ENCODE measurements at regions of chr20 and their contacts with region 1.

Region 1: GRCh38 chr20:58236612-58237330 is 8.3 kb upstream of the ANKRD60 start:
- ATAC-seq: peak; percentile 82 to 97 (median 90)
- H3K4me3 ChIP-seq: peak overlapping the region; percentile 18 to 45 (median 32)
- H3K27ac ChIP-seq: no peak overlapping the region
- H3K4me1 ChIP-seq: peaks cover 10 to 21% of the 10 kb centered on the region in 2 donors

Region 2: GRCh38 chr20:58296051-58296795 is 59.5 kb after region 1 on chr20:
- in situ Hi-C with region 1: no loop called
- ATAC-seq: no peak
- H3K4me3 ChIP-seq: no peak overlapping the region
- H3K27ac ChIP-seq: no peak overlapping the region
- H3K4me1 ChIP-seq: peaks cover 4 to 37% of the 10 kb centered on the region in 2 donors

Region 3: GRCh38 chr20:58447511-58448391 is 211.0 kb after region 1 on chr20:
- in situ Hi-C with region 1: loop called in 2 of 9 experiments (anchors 25 kb)
- ATAC-seq: peak in 6 of 8 experiments; percentile 32 to 81 (median 56)
- H3K4me3 ChIP-seq: no peak overlapping the region
- H3K27ac ChIP-seq: peak overlapping the region in 1 of 2 donors; percentile 70
- H3K4me1 ChIP-seq: peaks cover 38 to 56% of the 10 kb centered on the region in 2 donors

Region 4: GRCh38 chr20:58650776-58651558 is 414.2 kb after region 1 on chr20 and contains the start of gene STX16:
- in situ Hi-C with region 1: loop called in 4 of 9 experiments (anchors 25 kb)
- ATAC-seq: peak; percentile 79 to 85 (median 82)
- H3K4me3 ChIP-seq: peak within 1 kb of the TSS; percentile 57 to 95 (median 84)
- H3K27ac ChIP-seq: peak within 1 kb of the TSS; percentile 69 to 90
- H3K4me1 ChIP-seq: peaks cover 27 to 45% of the 10 kb centered on the region in 2 donors
- total RNA-seq, gene STX16: 17.5 to 86.6 (median 30.4) TPM

Region 5: DNA sequence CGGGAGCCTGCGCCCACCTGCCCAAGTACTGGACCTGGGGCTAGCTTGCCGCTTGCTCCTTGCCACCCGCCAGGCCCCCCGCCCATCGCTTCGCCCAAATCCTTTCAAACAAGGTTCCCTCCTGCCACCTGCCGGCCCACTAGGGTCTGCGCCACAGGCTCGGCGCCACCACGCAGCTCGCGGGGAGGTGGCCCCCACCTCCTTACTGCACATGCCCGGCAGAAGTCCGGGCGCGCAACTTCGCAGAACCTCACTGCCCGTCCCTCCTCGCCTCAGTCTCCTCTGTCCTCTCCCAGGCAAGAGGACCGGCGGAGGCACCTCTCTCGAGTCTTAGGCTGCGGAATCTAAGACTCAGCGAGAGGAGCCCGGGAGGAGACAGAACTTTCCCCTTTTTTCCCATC is 602.7 kb after region 1 on chr20:
- in situ Hi-C with region 1: loop called in 3 of 9 experiments (anchors 25 kb)
- ATAC-seq: peak in 7 of 8 experiments; percentile 65 to 88 (median 78)
- H3K4me3 ChIP-seq: peak overlapping the region in 4 of 5 donors; percentile 6 to 24 (median 20)
- H3K27ac ChIP-seq: no peak overlapping the region
- H3K4me1 ChIP-seq: peaks cover 0 to 10% of the 10 kb centered on the region in 2 donors

Region 6: DNA sequence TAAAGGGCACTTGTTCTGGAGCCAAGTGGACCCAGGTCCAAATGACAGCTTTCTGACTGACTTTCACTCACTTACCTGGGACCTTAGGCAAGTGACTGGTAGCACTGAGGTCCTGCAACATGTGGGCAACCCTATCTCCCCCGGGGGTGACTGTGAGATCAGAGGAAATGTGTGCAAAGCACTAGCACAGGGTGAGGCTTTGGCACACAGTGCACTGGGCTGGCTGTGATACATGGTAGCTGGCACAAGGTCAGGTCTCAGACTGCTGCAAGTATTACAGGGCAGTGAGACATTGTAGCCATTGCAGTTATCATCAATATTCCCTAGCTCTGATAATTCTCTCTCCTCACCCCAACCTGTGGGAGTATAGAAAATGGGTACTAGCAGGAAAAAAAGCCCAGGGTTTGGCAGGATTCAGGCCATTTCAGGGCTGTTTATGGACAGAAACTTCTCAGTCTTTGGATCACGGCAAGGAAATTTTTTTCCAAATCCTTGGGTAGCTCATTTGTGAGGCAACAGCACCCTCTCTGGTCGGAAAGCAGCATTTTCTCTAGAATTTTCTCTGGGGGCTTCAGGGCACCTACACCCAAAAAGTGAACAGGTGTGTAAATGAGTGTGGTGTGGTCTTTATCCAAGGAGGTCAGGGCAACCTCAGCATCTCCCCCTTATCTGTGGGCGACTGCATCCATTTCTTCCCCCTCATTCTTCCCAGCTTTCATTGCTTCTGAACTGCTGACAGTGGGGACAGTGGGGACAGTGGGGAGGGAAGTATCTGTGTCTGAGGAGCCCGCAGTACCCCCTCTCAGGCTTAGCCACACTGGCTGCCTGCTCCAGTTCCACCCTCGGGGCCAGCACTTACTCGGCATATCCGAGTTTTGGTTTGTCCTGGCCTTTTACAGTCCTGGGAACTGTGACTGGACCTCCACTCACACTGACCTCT is 1218.9 kb after region 1 on chr20:
- in situ Hi-C with region 1: loop called in 1 of 9 experiments (anchors 25 kb)
- ATAC-seq: peak; percentile 43 to 78 (median 54)
- H3K4me3 ChIP-seq: no peak overlapping the region
- H3K27ac ChIP-seq: no peak overlapping the region
- H3K4me1 ChIP-seq: peaks cover 0 to 9% of the 10 kb centered on the region in 2 donors